T-cell (primary cell): ENCODE measurements at regions of chr19 and their contacts with region 1.

Region 1: GRCh38 chr19:41531438-41532311 is 44.3 kb upstream of the CEACAM21 start:
- DNase-seq: peak; percentile 64 to 92 (median 87)
- ATAC-seq: peak; percentile 90 to 96 (median 92)
- H3K4me3 ChIP-seq: peak overlapping the region; percentile 35 to 64
- H3K4me3 Mint-ChIP-seq: peak overlapping the region; percentile 76 to 80 (median 79)
- H3K27ac ChIP-seq: peak overlapping the region; percentile 51
- H3K27ac Mint-ChIP-seq: peak overlapping the region; percentile 71 to 90
- H3K4me1 ChIP-seq: peaks cover 39 to 46% of the 10 kb centered on the region in 2 experiments
- H3K4me1 Mint-ChIP-seq: peaks cover 59 to 61% (median 61%) of the 10 kb centered on the region in 3 donors
- H3K27me3 ChIP-seq: no peaks in the 10 kb centered on the region
- H3K27me3 Mint-ChIP-seq: peaks cover 0 to 9% of the 10 kb centered on the region in 2 donors

Region 2: DNA sequence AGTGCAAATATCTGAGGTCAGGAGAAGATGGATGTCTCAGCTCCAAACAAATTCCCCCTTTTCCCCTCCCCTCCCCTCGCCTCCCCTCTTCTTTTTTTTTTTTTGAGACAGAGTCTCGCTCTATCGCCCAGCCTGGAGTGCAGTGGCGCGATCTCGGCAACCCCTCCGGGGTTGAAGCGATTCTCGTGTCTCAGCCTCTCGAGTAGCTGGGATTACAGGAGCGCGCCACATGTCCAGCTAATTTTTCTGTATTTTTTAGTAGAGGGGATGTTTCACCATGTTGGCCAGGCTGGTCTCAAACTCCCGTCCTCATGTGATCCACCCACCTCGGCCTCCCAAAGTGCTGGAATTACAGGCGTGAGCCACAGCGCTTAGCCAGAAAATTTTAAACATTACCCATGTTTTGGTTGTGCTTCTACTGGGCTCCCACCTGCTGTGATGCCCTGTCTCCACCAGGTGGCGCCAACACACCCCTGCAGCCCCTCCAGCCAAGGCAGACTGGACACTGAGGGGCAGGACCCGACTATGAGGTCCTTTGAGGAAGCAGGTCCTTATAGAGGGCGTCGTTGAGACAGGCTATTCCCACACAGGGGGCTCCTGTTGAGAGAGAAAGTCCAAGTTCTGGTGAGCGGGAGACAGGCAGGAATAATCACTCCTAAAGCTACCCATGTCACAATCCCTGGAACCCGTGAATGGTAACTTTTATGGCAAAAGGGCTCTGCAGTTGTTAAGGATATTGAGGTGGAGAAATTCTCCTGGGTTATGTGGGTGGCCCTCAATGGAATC is 82.4 kb before region 1 on chr19:
- CTCF ChIA-PET with region 1: interaction called in 1 of 2 experiments, 11 read pairs
- POLR2A ChIA-PET with region 1: no interaction called
- DNase-seq: peak in 34 of 35 experiments; percentile 25 to 82 (median 56)
- ATAC-seq: peak; percentile 86 to 90 (median 88)
- H3K4me3 ChIP-seq: no peak overlapping the region
- H3K4me3 Mint-ChIP-seq: peak overlapping the region; percentile 68 to 70 (median 68)
- H3K27ac ChIP-seq: no peak overlapping the region
- H3K27ac Mint-ChIP-seq: no peak overlapping the region
- H3K4me1 ChIP-seq: peaks cover 0 to 14% of the 10 kb centered on the region in 2 experiments
- H3K4me1 Mint-ChIP-seq: peaks cover 5 to 20% (median 13%) of the 10 kb centered on the region in 3 donors
- H3K27me3 ChIP-seq: peaks cover 0 to 29% of the 10 kb centered on the region in 2 experiments
- H3K27me3 Mint-ChIP-seq: peaks cover 0 to 20% of the 10 kb centered on the region in 2 donors

Region 3: GRCh38 chr19:41541990-41542584 is 10.4 kb after region 1 on chr19:
- CTCF ChIA-PET with region 1: interaction called in 1 of 2 experiments, 19 read pairs
- POLR2A ChIA-PET with region 1: interaction called in 1 of 2 experiments, 21 read pairs
- DNase-seq: peak; percentile 44 to 89 (median 66)
- ATAC-seq: peak in 2 of 4 experiments; percentile 34 to 40
- H3K4me3 ChIP-seq: no peak overlapping the region
- H3K4me3 Mint-ChIP-seq: peak overlapping the region; percentile 37 to 48 (median 41)
- H3K27ac ChIP-seq: no peak overlapping the region
- H3K27ac Mint-ChIP-seq: peak overlapping the region; percentile 87 to 89
- H3K4me1 ChIP-seq: peaks cover 26 to 43% of the 10 kb centered on the region in 2 experiments
- H3K4me1 Mint-ChIP-seq: peaks cover 48 to 52% (median 50%) of the 10 kb centered on the region in 3 donors
- H3K27me3 ChIP-seq: no peaks in the 10 kb centered on the region
- H3K27me3 Mint-ChIP-seq: no peaks in the 10 kb centered on the region

Region 4: DNA sequence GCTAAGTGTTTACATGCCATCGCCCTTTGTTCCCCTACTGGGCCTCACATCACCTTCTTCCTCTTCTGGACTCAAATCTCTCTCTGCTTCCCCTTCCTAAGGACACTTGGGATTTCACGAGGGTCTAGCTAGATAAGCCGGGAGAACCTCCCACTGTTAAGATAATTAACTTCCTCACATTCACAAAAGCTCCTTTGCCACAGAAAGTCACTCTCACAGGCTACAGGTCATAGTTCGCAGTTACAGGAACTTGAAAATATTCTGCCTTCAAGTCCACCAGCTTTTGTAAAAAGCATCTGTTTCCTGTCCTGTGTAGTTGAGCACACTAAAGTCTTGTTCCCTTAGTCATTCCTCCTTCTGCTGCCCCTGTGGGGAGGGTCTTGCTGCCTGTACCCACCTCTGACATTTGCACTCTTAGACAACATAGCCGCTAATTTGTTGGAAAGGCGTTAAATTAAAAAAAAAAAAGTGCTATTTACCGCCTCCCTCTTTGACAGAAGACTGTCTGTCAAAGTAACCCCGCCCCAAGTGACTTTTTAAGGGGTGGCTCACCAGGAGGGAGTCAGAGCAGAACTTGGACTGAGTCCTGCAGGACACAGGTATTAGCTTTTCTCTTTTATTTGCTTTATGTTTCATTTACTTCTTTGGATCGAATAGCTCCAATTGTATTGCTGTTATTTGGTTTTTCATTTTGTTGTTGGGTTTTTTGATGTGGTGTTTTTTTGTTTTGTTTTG is 17.4 kb after region 1 on chr19:
- CTCF ChIA-PET with region 1: interaction called in 1 of 2 experiments, 11 read pairs
- POLR2A ChIA-PET with region 1: interaction called, 18 to 26 read pairs
- DNase-seq: peak in 34 of 35 experiments; percentile 38 to 84 (median 68)
- ATAC-seq: peak; percentile 61 to 76 (median 65)
- H3K4me3 ChIP-seq: peak overlapping the region; percentile 78 to 98
- H3K4me3 Mint-ChIP-seq: peak overlapping the region; percentile 88 to 100 (median 98)
- H3K27ac ChIP-seq: peak overlapping the region; percentile 84
- H3K27ac Mint-ChIP-seq: peak overlapping the region; percentile 97 to 99
- H3K4me1 ChIP-seq: peaks cover 41 to 54% of the 10 kb centered on the region in 2 experiments
- H3K4me1 Mint-ChIP-seq: peaks cover 68 to 82% (median 74%) of the 10 kb centered on the region in 3 donors
- H3K27me3 ChIP-seq: no peaks in the 10 kb centered on the region
- H3K27me3 Mint-ChIP-seq: no peaks in the 10 kb centered on the region

Region 5: DNA sequence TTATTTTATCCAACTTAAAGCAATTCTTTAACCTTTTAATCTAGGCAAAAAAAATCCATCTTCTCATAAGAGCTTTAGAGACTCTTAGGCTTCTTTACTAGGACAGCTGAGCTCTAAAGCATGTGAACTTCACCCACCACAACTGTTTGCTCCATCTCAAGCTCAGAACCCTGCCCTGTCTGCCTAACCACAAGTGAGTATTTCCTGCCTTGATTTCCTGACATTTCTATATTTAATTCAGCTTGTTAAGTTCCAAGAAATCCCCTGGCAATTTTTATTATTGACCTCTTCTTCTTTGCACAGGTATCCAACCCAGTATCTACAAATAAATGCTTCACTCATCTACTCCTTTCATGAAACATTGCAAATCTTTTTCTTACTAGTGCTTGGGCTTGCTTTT is 23.2 kb after region 1 on chr19:
- CTCF ChIA-PET with region 1: interaction called in 1 of 2 experiments, 11 read pairs
- POLR2A ChIA-PET with region 1: interaction called, 18 to 26 read pairs
- DNase-seq: peak in 11 of 35 experiments; percentile 29 to 79 (median 46)
- ATAC-seq: peak; percentile 78 to 87 (median 84)
- H3K4me3 ChIP-seq: no peak overlapping the region
- H3K4me3 Mint-ChIP-seq: peak overlapping the region; percentile 55 to 98 (median 88)
- H3K27ac ChIP-seq: peak overlapping the region; percentile 70
- H3K27ac Mint-ChIP-seq: peak overlapping the region; percentile 97 to 99
- H3K4me1 ChIP-seq: peaks cover 37 to 55% of the 10 kb centered on the region in 2 experiments
- H3K4me1 Mint-ChIP-seq: peaks cover 74 to 87% (median 80%) of the 10 kb centered on the region in 3 donors
- H3K27me3 ChIP-seq: no peaks in the 10 kb centered on the region
- H3K27me3 Mint-ChIP-seq: no peaks in the 10 kb centered on the region

Region 6: DNA sequence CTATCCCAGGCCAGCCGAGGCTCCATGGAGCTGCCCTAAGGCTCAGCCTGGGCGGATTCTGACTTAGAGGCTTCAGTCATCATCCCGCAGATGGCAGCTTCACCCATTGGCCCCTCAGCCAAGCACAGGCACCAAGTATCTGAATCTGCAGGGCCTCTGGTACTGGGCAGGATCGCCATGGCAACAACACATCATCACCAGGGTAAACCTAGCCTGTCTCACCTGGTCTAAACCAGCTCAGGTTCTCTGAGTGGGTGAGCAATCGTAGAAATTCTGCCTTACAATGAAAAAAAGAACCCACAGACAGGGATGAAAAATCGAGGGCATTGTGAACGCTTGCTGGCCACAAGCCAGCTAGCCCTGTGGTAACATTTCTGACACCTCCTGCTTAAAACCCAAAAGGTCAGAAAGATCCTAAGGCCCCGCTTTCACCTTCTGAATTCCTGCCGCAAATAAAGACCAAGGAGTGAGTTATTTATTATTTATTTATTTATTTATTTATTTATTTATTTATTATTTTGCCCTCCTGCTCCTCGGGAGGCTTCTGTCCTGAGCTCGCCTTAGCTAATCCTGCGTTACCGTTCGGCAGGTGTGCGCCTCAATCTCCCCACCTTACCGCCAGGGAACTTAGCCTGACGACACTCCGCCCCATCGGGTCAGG is 32.3 kb after region 1 on chr19:
- CTCF ChIA-PET with region 1: interaction called, 4 to 23 read pairs
- POLR2A ChIA-PET with region 1: interaction called in 1 of 2 experiments, 8 read pairs
- DNase-seq: peak in 31 of 35 experiments; percentile 23 to 75 (median 50)
- ATAC-seq: peak; percentile 46 to 83 (median 62)
- H3K4me3 ChIP-seq: peak overlapping the region; percentile 38 to 42
- H3K4me3 Mint-ChIP-seq: peak overlapping the region; percentile 68 to 85 (median 73)
- H3K27ac ChIP-seq: peak overlapping the region; percentile 56
- H3K27ac Mint-ChIP-seq: peak overlapping the region; percentile 43 to 76
- H3K4me1 ChIP-seq: peaks cover 28 to 35% of the 10 kb centered on the region in 2 experiments
- H3K4me1 Mint-ChIP-seq: peaks cover 80 to 89% (median 82%) of the 10 kb centered on the region in 3 donors
- H3K27me3 ChIP-seq: no peaks in the 10 kb centered on the region
- H3K27me3 Mint-ChIP-seq: no peaks in the 10 kb centered on the region